Activated CD4-positive, alpha-beta memory T cell treated with anti-CD3 and anti-CD28 coated beads for 36 hours (primary cell): ENCODE measurements at regions of chr15 and their contacts with region 1.

Region 1: DNA sequence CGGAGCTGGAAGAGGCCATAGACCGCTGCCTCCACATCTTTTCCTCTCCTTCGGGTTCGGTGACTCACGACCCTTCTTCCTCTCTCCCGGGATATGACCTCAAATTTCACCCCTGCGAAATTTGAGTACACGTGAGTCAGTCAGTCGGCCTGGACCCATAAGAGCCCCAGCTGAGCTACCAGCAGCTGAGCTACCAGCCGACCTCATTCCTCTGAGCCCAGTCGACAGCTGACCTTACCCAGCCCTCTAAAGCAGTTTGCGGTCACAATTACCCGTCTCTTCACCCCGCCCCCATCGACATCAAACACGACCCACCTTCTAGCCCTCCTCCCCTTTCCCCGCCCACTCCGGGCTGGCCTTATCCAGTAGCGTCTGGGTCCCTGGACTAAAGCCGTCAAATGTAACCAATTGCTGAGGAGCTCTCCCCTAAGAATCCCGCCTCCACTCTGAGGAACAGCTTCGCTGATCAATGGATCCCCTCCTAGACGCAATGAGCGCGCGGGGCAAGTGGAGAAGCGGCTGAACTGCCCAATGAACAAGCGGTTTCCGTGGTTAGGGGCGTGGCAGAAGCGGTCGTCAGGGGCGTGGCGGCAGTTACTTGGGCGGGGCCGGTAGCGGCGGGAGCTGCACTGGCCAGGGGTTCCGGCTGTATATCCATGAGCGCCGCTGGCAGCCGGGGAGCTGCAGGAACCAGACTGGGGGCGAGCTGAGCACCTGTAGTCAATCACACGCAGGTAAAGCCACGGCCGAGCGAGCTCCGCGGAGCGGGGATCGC is at the start of gene ABHD2:
- DNase-seq: peak; percentile 99
- H3K4me3 Mint-ChIP-seq: no peak within 1 kb of the TSS
- H3K27ac Mint-ChIP-seq: no peak within 1 kb of the TSS
- H3K4me1 Mint-ChIP-seq: peaks cover 36% of the 10 kb centered on the region
- H3K27me3 Mint-ChIP-seq: no peaks in the 10 kb centered on the region
- total RNA-seq, gene ABHD2: 36.0 to 38.5 TPM

Region 2: DNA sequence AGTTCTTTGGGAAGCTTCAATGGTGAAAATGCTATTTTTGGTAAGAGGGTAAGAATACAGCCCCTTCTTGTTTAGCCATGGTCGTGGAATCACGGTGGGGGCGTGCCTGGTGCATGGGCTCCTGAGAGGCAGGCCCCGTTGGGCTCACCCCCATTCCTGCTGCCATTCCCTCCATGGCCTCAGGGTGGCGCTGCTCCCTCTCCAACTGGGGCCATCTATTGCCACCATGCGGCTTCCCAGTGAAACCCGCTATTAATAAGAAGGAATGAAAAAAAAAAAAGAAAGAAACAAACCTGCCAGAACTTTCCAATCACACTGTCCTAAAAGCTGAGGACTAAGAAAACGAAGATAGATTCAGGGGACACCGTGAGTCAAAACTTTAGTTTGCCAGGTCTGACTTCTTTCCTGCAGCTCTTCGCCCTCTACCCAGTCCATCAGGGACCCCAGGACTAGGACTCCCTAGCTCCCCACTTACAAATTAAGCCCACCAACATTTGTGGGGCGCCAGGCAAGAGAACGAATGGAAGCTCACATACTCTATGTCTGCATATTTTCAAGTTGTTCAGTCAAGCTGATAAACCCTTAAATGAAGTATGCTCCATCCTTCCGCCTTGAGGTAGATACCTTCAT is 30.4 kb before region 1 on chr15:
- CTCF ChIA-PET with region 1: interaction called, 52 read pairs
- POLR2A ChIA-PET with region 1: interaction called, 3 read pairs
- intact Hi-C with region 1: loop called (anchors 5 kb)
- DNase-seq: peak; percentile 90
- H3K4me3 Mint-ChIP-seq: no peak overlapping the region
- H3K27ac Mint-ChIP-seq: no peak overlapping the region
- H3K4me1 Mint-ChIP-seq: peaks cover 11% of the 10 kb centered on the region
- H3K27me3 Mint-ChIP-seq: no peaks in the 10 kb centered on the region

Region 3: GRCh38 chr15:89077750-89078149 is 10.3 kb before region 1 on chr15:
- CTCF ChIA-PET with region 1: interaction called, 3 read pairs
- POLR2A ChIA-PET with region 1: interaction called, 5 read pairs
- intact Hi-C with region 1: loop called (anchors 1 kb)
- DNase-seq: no peak
- H3K4me3 Mint-ChIP-seq: no peak overlapping the region
- H3K27ac Mint-ChIP-seq: no peak overlapping the region
- H3K4me1 Mint-ChIP-seq: peaks cover 15% of the 10 kb centered on the region
- H3K27me3 Mint-ChIP-seq: no peaks in the 10 kb centered on the region

Region 4: GRCh38 chr15:89171136-89172072 is 83.4 kb after region 1 on chr15:
- CTCF ChIA-PET with region 1: interaction called, 18 read pairs
- POLR2A ChIA-PET with region 1: interaction called, 26 read pairs
- intact Hi-C with region 1: loop called (anchors 1 kb)
- DNase-seq: peak; percentile 53
- H3K4me3 Mint-ChIP-seq: no peak overlapping the region
- H3K27ac Mint-ChIP-seq: no peak overlapping the region
- H3K4me1 Mint-ChIP-seq: peaks cover 24% of the 10 kb centered on the region
- H3K27me3 Mint-ChIP-seq: no peaks in the 10 kb centered on the region

Region 5: DNA sequence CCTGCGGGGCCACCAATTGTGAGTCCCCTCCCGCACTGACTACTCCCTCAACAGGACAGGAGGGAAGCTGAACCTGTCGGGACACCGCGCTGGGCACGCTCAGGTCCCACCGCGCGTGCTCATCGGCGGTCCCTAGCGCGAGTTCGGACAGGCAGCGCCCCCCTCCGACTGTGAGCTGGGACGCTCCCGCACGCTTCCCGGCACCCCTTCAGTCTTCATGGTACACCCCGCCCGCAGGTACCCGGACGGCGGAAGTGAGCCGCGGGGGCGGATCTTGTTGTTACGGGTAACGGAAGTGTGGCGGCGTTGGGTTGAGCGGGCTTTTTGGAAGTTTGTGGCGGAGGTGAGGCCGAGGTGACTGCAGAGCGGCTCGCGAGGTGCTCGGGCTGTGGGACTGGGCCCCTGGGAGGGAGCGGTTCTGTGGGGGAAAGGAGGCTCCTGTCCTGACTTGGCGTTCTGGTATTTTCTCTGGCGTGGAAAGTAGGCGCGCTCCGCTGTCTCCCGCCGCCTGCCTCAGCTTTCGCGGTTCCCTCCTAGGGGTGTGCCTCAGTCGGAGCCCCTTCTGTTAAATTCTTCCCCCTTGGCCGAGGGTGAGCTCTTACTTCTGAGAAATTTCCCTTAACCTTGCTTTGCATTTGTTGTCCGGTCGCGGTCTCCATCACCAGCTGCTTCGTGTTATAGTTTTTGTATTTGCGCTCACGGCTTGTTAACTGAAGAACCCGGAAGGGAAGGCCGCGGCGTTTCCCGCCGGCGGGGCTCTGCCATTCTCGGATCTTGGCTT is 155.9 kb after region 1 on chr15 and contains the start of gene FANCI:
- CTCF ChIA-PET with region 1: interaction called, 4 read pairs
- POLR2A ChIA-PET with region 1: interaction called, 3 read pairs
- intact Hi-C with region 1: loop called (anchors 1 kb)
- DNase-seq: peak; percentile 98
- H3K4me3 Mint-ChIP-seq: peak within 1 kb of the TSS; percentile 96
- H3K27ac Mint-ChIP-seq: peak within 1 kb of the TSS; percentile 90
- H3K4me1 Mint-ChIP-seq: peaks cover 27% of the 10 kb centered on the region
- H3K27me3 Mint-ChIP-seq: no peaks in the 10 kb centered on the region
- total RNA-seq, gene FANCI: 208 to 213 TPM

Region 6: GRCh38 chr15:89760303-89761008 is 672.4 kb after region 1 on chr15:
- CTCF ChIA-PET with region 1: no interaction called
- POLR2A ChIA-PET with region 1: no interaction called
- intact Hi-C with region 1: no loop called
- DNase-seq: peak; percentile 86
- H3K4me3 Mint-ChIP-seq: no peak overlapping the region
- H3K27ac Mint-ChIP-seq: no peak overlapping the region
- H3K4me1 Mint-ChIP-seq: no peaks in the 10 kb centered on the region
- H3K27me3 Mint-ChIP-seq: peaks cover 5% of the 10 kb centered on the region